ENCODE measurements at regions of chr9 and their contacts with region 1.

Region 1: DNA sequence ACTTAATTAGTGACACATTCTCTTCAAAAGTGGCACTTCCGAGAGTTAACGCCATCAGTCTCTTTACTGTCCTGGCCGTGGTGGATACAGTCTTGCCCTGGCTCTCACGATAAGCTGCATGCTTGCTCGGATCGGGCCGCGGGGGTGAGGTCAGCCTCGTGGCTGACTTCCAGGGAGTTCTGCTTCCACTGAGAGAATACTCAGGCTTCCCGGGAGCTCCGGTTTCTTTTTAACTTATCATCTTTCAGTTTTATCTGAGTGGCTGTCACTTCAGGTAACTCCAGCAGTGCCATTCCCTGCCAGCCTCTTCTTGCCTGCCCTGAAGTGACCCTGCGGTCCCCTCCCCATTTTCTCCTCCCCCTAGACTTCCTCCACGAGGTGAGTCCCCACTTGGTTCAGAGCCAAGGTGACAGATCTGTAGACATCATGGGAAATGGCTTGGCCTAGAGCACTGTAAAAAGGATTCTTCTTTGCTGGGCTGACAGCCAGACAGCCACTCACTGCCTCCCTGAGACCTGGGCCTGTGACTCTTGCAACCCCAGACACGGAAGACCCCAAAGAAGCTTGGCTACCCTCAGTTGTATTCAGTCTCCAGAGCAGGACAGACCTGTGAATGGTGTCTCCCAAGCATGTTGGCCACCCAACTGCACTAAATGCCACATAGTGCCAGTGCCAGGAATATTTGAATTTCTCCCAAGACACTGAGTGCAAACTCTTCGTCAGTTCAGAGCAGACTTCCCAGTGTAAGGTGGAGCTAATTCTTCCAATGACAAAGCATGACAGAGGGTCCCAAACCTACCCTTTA is 95.1 kb downstream of the DAPK1 start:
- DNase-seq: no peak
- H3K4me3 ChIP-seq: no peak overlapping the region
- H3K27ac ChIP-seq: no peak overlapping the region
- H3K4me1 ChIP-seq: no peaks in the 10 kb centered on the region
- H3K27me3 ChIP-seq: no peaks in the 10 kb centered on the region
- CTCF ChIP-seq: no peak

Region 2: DNA sequence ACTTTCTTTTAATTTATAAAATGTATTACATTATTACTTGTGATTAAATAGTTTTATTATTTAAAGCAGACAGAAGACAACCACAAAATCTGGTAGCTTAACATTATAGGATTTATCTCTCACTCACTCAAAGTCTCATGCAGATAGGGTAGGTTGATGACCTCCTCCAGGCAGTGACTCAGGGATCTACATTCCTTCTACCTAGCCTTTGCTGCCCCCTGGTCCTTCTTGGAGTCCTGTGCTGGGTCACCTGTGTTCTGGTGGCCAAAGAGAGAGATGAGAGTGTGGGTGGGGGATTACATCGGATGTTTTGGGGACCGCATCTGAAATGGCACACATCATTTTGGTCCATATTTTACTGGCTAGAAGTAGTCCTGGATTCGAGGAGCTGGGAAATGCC is 37.5 kb after region 1 on chr9:
- CTCF ChIA-PET with region 1: no interaction called
- dilution Hi-C with region 1: loop called (anchors 5 kb)
- in situ Hi-C with region 1: no loop called
- intact Hi-C with region 1: no loop called
- DNase-seq: no peak
- H3K4me3 ChIP-seq: no peak overlapping the region
- H3K27ac ChIP-seq: no peak overlapping the region
- H3K4me1 ChIP-seq: no peaks in the 10 kb centered on the region
- H3K27me3 ChIP-seq: no peaks in the 10 kb centered on the region
- CTCF ChIP-seq: peak in 1 of 2 donors; percentile 10

Measured in mammary epithelial cell (primary cell).